Psoas muscle (tissue), 8 donors: ENCODE measurements at regions of chr9 and their contacts with region 1.

Region 1: DNA sequence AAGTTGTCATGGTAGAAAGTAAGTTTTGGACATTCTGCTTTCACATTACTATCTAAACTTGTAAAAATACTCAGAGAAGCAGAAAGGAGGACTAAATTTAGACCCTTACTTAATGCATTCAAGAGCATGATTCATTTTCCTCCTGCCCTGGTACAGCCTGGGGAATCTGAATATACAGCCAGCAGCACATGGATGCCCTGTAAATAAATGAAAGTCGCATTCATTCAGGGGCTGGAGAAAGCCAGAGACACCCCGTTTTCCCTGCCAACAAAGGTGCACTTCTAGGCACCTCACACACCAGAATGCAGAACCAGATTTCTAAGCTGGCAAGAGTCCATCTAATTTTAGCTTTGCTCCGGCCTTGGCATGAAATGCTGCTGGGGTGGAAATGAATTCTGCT is 172.7 kb upstream of the KLF9 start:
- DNase-seq: no peak
- ATAC-seq: peak; percentile 81 to 93 (median 90)
- H3K4me3 ChIP-seq: peak overlapping the region; percentile 24
- H3K27ac ChIP-seq: peak overlapping the region; percentile 82
- H3K4me1 ChIP-seq: peaks cover 30% of the 10 kb centered on the region
- H3K27me3 ChIP-seq: no peaks in the 10 kb centered on the region
- CTCF ChIP-seq: no peak

Region 2: GRCh38 chr9:70510157-70510770 is 76.9 kb before region 1 on chr9:
- intact Hi-C with region 1: loop called in 1 of 2 experiments (anchors 5 kb)
- DNase-seq: peak; percentile 36 to 65
- ATAC-seq: peak in 3 of 4 donors; percentile 65 to 76 (median 70)
- H3K4me3 ChIP-seq: no peak overlapping the region
- H3K27ac ChIP-seq: no peak overlapping the region
- H3K4me1 ChIP-seq: peaks cover 10% of the 10 kb centered on the region
- H3K27me3 ChIP-seq: no peaks in the 10 kb centered on the region
- CTCF ChIP-seq: peak; percentile 63